ENCODE measurements at regions of chr9 and their contacts with region 1.

Region 1: GRCh38 chr9:130866474-130866965 is 30.1 kb downstream of the QRFP start:
- DNase-seq: peak; percentile 90
- H3K27ac ChIP-seq: no peak overlapping the region
- CTCF ChIP-seq: peak; percentile 99

Region 2: GRCh38 chr9:129436751-129437625 is 1429.5 kb before region 1 on chr9:
- CTCF ChIA-PET with region 1: no interaction called
- POLR2A ChIA-PET with region 1: no interaction called
- DNase-seq: peak; percentile 58
- H3K27ac ChIP-seq: no peak overlapping the region
- CTCF ChIP-seq: no peak

Region 3: GRCh38 chr9:130549093-130549735 is 317.3 kb before region 1 on chr9:
- CTCF ChIA-PET with region 1: no interaction called
- POLR2A ChIA-PET with region 1: no interaction called
- DNase-seq: peak; percentile 70
- H3K27ac ChIP-seq: no peak overlapping the region
- CTCF ChIP-seq: no peak

Region 4: GRCh38 chr9:130701056-130702022 is 165.2 kb before region 1 on chr9:
- CTCF ChIA-PET with region 1: interaction called, 46 read pairs
- POLR2A ChIA-PET with region 1: interaction called, 5 read pairs
- DNase-seq: peak; percentile 70
- H3K27ac ChIP-seq: peak overlapping the region; percentile 11
- CTCF ChIP-seq: peak; percentile 99

Region 5: GRCh38 chr9:130780865-130781504 is 85.5 kb before region 1 on chr9:
- CTCF ChIA-PET with region 1: no interaction called
- POLR2A ChIA-PET with region 1: no interaction called
- DNase-seq: no peak
- H3K27ac ChIP-seq: no peak overlapping the region
- CTCF ChIP-seq: no peak

Region 6: DNA sequence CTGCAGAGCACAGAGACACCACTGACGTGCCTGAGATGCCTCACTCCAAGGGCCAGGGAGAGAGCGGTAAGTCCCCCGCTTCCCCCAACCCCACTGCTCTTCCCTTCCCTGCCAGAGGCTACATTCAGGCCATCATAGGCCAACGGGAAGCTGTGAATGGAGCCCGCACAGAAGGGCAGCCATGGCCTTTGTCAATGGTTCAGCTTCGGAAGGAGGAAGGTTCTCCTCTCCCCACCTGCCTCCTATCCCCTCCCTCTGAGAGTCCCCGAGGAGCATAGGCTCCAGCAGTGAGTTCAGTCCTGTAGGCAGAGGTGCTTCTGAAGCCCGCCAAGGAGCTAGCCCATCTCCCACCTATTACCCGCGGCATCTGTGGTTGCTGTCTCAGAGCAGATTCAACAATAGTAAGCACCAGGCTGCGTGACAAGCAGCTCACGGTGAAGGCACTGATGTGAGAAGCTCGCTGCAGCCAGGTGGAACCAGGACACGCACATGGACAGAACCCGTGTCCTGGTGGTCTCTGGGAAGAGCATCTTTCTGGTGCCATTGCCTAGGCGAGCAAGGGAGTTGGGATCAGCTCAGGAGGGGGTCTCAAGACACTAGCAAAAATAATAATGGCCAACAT is 14.2 kb after region 1 on chr9:
- CTCF ChIA-PET with region 1: interaction called, 10 read pairs
- POLR2A ChIA-PET with region 1: interaction called, 9 read pairs
- DNase-seq: no peak
- H3K27ac ChIP-seq: no peak overlapping the region; the same call in 1 of the 2 replicates
- CTCF ChIP-seq: no peak

Region 7: GRCh38 chr9:130940693-130941576 is 74.4 kb after region 1 on chr9:
- CTCF ChIA-PET with region 1: interaction called, 11 read pairs
- POLR2A ChIA-PET with region 1: no interaction called
- DNase-seq: peak; percentile 99
- H3K27ac ChIP-seq: no peak overlapping the region
- CTCF ChIP-seq: peak; percentile 99

Region 8: DNA sequence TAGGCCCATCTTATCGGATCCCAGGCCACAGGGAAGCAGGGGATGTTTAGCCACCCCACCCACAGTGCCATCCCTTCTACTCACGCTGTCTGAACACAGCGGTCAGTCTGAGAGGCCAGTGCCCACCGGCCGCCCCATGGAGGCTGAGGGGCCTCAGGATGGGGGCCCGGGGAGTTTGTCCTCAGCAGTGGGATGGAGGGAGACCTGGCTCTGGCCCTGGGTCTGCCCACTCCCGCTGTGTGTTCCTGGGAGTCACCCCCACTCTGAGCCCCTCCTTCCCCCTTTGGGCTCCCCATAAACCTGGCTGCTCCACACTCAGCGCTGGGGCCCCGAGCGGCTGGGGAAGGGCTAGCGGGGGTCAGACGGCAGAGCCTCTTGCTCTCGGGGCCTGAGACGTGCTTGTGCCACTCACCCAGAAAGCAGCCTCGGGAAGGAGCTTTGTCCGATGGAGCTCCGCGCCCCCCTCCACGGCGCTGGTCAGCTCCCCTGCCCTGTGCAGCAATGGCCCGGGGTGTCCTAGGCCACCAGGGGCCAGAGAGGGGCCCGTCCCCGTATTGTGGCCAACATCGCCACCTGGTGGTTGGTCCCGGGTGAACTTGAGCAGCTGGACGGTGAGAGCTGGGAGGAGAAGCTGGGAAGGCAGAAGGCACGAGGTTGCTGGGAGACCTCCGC is 131.5 kb after region 1 on chr9:
- CTCF ChIA-PET with region 1: interaction called, 28 read pairs
- POLR2A ChIA-PET with region 1: no interaction called
- DNase-seq: peak; percentile 98
- H3K27ac ChIP-seq: no peak overlapping the region
- CTCF ChIP-seq: peak; percentile 93

Region 9: GRCh38 chr9:131181091-131181681 is 314.7 kb after region 1 on chr9:
- CTCF ChIA-PET with region 1: no interaction called
- POLR2A ChIA-PET with region 1: no interaction called
- DNase-seq: no peak
- H3K27ac ChIP-seq: no peak overlapping the region
- CTCF ChIP-seq: peak; percentile 16; the same call in 1 of the 2 replicates